ENCODE measurements at regions of chr1 and their contacts with region 1.

Region 1: DNA sequence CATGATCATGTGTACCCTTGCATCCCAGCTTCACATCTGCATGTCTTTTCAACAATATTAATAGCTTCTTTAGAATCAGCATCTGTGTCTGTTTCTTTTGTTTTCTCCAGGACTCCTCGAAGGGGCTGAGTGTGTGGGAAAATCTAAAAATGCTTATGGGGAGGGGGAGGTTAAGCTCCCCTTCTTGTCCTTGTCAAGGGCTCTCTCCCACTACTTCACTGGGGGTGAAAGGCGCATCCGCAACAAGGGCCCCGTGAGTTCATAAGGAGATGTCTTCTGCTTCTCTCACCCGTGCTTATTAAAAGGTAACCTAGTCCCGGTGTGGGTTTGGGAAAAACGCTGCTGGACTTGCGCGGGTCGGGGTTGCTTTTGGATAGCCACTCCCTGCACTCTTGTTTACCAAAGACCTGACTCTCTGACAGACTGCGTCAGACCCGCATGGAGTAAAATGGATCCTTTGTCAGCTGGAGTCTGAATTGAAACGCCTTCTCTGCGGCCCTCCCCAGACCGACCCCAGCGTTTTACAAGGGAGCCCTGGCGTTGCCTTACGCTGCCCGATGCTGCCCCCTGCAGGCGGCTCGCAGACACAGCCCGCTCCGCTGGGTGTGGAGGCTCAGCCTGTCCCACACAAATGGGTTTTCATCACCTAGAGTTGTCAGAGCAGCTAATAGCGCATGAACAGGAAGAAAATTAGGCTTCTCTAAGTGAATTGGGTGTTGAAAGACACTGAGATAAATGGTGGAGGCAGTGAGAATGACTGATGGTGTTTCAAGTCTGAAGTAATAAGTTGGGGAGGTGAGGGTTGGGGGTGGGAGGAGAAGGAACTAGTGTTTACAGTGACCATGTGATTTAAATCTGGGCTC is 53.8 kb downstream of the IER5 start:
- DNase-seq: peak; percentile 61 to 93 (median 82)
- ATAC-seq: peak; percentile 97 to 100 (median 98)
- H3K4me3 ChIP-seq: no peak overlapping the region
- H3K4me3 Mint-ChIP-seq: peak overlapping the region in 1 of 3 donors; percentile 4
- H3K27ac ChIP-seq: no peak overlapping the region
- H3K27ac Mint-ChIP-seq: peak overlapping the region; percentile 5 to 70
- H3K4me1 ChIP-seq: peaks cover 3 to 28% of the 10 kb centered on the region in 2 experiments
- H3K4me1 Mint-ChIP-seq: peaks cover 30 to 59% (median 51%) of the 10 kb centered on the region in 3 donors
- H3K27me3 ChIP-seq: no peaks in the 10 kb centered on the region
- H3K27me3 Mint-ChIP-seq: no peaks in the 10 kb centered on the region

Region 2: DNA sequence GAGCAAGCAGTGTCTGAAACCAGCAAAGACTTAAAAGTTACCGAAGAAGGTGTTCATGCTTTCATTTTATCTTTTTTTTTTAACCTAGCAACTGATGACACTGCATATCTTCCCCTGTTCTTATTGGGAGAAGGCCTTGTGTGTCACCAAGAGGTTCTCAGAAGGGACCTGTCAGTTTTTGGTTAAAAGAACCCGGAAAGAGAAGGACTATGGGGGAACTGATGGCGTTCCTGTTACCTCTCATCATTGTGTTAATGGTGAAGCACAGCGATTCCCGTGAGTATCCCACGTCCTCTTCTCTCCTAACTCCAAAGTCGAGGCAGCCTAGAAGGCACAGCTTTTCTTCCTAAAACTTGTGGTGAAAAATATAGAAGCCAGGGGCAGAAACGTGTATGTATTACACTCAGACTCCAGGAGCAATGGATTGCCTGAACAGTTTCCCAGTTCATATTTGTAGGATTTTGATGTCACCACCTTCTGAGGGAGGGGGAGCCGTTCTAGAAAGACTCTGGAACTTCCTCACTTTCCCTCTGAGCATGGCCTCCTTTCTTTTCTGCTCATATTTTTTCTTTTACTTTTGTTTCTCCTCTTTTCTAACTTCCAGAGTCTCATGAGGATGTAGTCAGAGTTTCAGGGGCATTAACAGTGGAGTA is 108.4 kb before region 1 on chr1 and contains the start of gene MR1:
- CTCF ChIA-PET with region 1: interaction called, 14 to 28 read pairs
- POLR2A ChIA-PET with region 1: no interaction called
- DNase-seq: peak in 30 of 35 experiments; percentile 10 to 89 (median 32)
- ATAC-seq: peak; percentile 97 to 98 (median 98)
- H3K4me3 ChIP-seq: peak within 1 kb of the TSS; percentile 63 to 87
- H3K4me3 Mint-ChIP-seq: peak within 1 kb of the TSS; percentile 94 to 99 (median 95)
- H3K27ac ChIP-seq: peak within 1 kb of the TSS; percentile 94
- H3K27ac Mint-ChIP-seq: peak within 1 kb of the TSS; percentile 99 to 100
- H3K4me1 ChIP-seq: peaks cover 31 to 46% of the 10 kb centered on the region in 2 experiments
- H3K4me1 Mint-ChIP-seq: peaks cover 60 to 67% (median 60%) of the 10 kb centered on the region in 3 donors
- H3K27me3 ChIP-seq: no peaks in the 10 kb centered on the region
- H3K27me3 Mint-ChIP-seq: no peaks in the 10 kb centered on the region
- total RNA-seq, gene MR1: 18.3 to 30.7 (median 22.7) TPM

Region 3: DNA sequence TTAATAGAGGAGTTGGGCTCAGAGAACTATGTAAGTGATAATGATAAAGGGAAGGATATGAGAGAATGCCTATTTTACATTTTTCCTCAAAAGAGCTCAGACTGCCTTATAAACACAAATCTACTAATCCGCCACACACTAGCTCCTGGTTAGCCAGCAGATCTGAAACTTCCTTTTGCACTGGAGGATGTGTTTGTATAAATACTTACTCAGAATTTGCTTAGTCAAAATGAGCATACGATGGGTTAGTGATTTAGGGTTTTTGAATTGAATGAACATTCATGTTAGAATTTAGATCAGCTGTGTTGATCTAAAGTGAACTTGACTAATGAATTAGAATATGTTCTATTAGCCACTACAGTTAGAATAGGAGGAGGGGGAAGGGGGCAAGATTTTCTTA is 62.9 kb before region 1 on chr1:
- CTCF ChIA-PET with region 1: interaction called, 24 to 28 read pairs
- POLR2A ChIA-PET with region 1: no interaction called
- DNase-seq: no peak
- ATAC-seq: no peak
- H3K4me3 ChIP-seq: no peak overlapping the region
- H3K4me3 Mint-ChIP-seq: no peak overlapping the region
- H3K27ac ChIP-seq: no peak overlapping the region
- H3K27ac Mint-ChIP-seq: no peak overlapping the region
- H3K4me1 ChIP-seq: no peaks in the 10 kb centered on the region
- H3K4me1 Mint-ChIP-seq: peaks cover 2 to 10% (median 2%) of the 10 kb centered on the region in 3 donors
- H3K27me3 ChIP-seq: peaks cover 0 to 10% of the 10 kb centered on the region in 2 experiments
- H3K27me3 Mint-ChIP-seq: peaks cover 24 to 27% of the 10 kb centered on the region in 2 donors

Region 4: GRCh38 chr1:181105134-181106021 is 36.9 kb before region 1 on chr1:
- CTCF ChIA-PET with region 1: interaction called, 5 to 11 read pairs
- POLR2A ChIA-PET with region 1: no interaction called
- DNase-seq: peak; percentile 86 to 97 (median 92)
- ATAC-seq: peak; percentile 90 to 94 (median 92)
- H3K4me3 ChIP-seq: peak overlapping the region; percentile 58 to 83
- H3K4me3 Mint-ChIP-seq: peak overlapping the region; percentile 77 to 86 (median 85)
- H3K27ac ChIP-seq: peak overlapping the region; percentile 87
- H3K27ac Mint-ChIP-seq: peak overlapping the region; percentile 62 to 90
- H3K4me1 ChIP-seq: peaks cover 29 to 46% of the 10 kb centered on the region in 2 experiments
- H3K4me1 Mint-ChIP-seq: peaks cover 55 to 59% (median 58%) of the 10 kb centered on the region in 3 donors
- H3K27me3 ChIP-seq: peaks cover 0 to 11% of the 10 kb centered on the region in 2 experiments
- H3K27me3 Mint-ChIP-seq: peaks cover 0 to 5% of the 10 kb centered on the region in 2 donors

Region 5: DNA sequence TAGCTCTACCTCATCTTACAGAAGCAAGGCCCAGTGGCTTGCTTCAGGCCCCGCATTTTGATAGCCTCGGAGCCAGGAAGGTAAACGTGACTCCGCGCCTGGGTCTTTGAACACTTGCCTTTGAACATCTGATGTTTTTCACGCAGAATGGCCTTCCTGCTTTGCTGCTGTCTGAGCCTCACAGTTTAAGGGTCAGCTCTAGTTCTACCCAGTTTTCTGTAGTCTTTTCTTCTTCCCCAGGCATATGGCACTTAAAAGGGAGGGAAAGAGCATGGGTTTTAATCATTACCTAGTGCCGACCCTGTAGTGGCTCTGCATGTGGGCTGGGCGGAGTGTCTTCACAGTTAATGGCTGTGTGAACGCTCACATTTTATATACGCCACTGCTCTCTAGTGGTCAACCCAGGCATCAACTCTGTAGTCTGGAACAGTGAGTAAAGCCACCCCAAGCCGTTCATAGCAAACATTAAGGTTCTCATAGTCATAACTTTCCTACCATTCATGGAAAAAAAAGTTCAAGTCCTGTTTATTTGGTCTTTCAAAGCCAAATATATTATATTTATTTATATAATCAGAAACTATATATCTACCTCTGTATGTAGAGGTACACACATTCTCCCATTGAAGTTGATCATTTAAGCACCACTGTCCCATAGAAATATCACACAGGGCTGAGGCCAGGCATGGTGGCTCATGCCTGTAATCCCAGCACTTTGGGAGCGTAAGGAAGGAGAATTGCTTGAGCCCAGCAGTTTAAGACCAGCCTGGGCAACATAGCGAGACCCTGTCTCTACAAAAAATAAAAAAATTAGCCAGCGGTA is 24.3 kb after region 1 on chr1:
- CTCF ChIA-PET with region 1: interaction called, 4 to 16 read pairs
- POLR2A ChIA-PET with region 1: no interaction called
- DNase-seq: peak; percentile 35 to 87 (median 67)
- ATAC-seq: peak; percentile 98 to 99 (median 99)
- H3K4me3 ChIP-seq: no peak overlapping the region
- H3K4me3 Mint-ChIP-seq: peak overlapping the region; percentile 51 to 59 (median 52)
- H3K27ac ChIP-seq: no peak overlapping the region
- H3K27ac Mint-ChIP-seq: peak overlapping the region; percentile 69 to 82
- H3K4me1 ChIP-seq: peaks cover 0 to 9% of the 10 kb centered on the region in 2 experiments
- H3K4me1 Mint-ChIP-seq: peaks cover 5 to 8% (median 7%) of the 10 kb centered on the region in 3 donors
- H3K27me3 ChIP-seq: no peaks in the 10 kb centered on the region
- H3K27me3 Mint-ChIP-seq: no peaks in the 10 kb centered on the region

Measured in T-cell (primary cell).